Adrenal gland (tissue), 19 donors: ENCODE measurements at regions of chr21 and their contacts with region 1.

Region 1: GRCh38 chr21:43976661-43977060 is 35.4 kb upstream of the TRAPPC10 start:
- DNase-seq: no peak
- H3K4me3 ChIP-seq: no peak overlapping the region
- H3K27ac ChIP-seq: no peak overlapping the region
- H3K4me1 ChIP-seq: no peaks in the 10 kb centered on the region
- H3K27me3 ChIP-seq: no peaks in the 10 kb centered on the region
- CTCF ChIP-seq: no peak
- POLR2A ChIP-seq: no peak

Region 2: DNA sequence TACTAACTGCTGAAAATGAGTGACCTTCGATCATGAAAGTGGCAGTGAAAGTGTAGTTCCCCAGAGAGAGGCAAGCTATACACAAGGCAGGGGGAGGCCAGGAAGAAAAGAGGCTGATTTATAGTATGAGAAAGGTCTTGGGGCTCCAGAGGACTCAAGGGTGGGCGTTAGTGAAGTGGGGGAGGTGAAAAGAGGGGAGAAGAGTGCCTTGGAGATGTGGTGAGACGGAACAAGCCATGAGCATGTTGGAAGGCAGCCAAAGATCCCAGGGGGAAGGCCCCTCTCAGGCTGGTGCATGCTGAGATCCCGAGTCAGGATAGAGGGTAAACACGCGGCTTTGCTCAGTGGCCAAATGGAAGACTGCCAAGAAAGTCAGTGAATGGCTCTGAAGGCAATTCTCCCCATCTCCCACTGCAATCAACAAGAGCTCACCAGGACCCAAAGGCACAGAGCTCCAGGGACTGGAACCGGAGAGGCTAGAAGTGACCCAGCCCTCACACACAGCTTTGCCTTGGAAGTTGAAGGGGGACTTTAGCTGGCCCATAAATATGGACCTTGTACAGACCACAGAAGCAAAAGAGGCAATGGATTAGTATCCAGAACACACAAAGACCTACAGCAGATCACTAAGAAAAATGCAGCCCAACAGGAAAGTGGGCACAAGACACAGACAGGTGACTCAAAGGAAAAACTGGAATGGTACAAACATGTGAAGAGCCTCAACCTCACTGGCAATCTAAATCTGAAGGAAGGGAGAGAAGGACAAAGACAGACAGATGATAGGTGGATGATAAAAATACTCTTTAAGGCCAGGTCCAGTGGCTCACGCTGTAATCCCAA is 366.9 kb before region 1 on chr21:
- intact Hi-C with region 1: no loop called
- DNase-seq: peak in 3 of 7 donors; percentile 39 to 64 (median 42)
- H3K4me3 ChIP-seq: no peak overlapping the region
- H3K27ac ChIP-seq: no peak overlapping the region
- H3K4me1 ChIP-seq: peaks cover 0 to 11% of the 10 kb centered on the region in 2 donors
- H3K27me3 ChIP-seq: no peaks in the 10 kb centered on the region
- CTCF ChIP-seq: no peak
- POLR2A ChIP-seq: no peak

Region 3: DNA sequence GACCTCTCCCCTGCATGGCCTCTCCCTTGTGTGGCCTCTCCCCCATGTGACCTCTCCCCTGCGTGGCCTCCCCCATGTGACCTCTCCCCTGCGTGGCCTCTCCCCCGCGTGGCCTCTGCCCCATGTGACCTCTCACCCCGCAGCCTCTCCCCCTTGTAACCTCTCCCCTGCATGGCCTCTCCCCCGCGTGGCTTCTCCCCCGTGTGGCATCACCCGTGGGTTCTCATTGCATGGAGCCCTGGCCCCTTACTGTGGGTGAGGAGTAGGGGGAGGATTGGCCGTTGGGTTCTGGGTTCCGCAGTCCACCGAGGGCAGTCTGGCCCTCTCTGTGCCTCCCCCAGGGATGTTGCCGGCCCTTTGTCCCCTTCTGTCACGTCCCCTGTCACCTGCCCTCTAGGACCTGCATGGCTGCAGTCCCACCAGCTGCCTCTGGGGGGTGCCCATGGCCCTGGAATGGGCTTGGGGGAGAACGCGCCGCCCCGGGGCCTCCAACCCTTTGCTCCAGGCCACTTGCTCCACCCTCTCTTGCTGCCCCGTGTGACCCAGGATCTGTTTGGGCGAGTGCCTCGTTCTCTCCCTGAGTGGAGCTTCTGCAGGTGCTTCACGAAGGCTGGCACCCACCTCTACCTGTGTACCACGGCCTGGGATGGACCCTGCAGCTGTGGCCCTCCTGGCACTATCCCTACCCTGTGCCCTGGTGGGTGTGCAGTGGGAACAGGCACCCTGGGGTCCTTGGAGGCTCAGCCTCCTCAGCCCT is 166.0 kb before region 1 on chr21:
- intact Hi-C with region 1: loop called in 1 of 2 experiments (anchors 2 kb)
- DNase-seq: peak; percentile 87 to 95 (median 89)
- H3K4me3 ChIP-seq: no peak overlapping the region
- H3K27ac ChIP-seq: no peak overlapping the region
- H3K4me1 ChIP-seq: peaks cover 0 to 13% of the 10 kb centered on the region in 2 donors
- H3K27me3 ChIP-seq: no peaks in the 10 kb centered on the region
- CTCF ChIP-seq: peak; percentile 92 to 99 (median 96)
- POLR2A ChIP-seq: no peak